ENCODE measurements at regions of chr1 and their contacts with region 1.

Region 1: DNA sequence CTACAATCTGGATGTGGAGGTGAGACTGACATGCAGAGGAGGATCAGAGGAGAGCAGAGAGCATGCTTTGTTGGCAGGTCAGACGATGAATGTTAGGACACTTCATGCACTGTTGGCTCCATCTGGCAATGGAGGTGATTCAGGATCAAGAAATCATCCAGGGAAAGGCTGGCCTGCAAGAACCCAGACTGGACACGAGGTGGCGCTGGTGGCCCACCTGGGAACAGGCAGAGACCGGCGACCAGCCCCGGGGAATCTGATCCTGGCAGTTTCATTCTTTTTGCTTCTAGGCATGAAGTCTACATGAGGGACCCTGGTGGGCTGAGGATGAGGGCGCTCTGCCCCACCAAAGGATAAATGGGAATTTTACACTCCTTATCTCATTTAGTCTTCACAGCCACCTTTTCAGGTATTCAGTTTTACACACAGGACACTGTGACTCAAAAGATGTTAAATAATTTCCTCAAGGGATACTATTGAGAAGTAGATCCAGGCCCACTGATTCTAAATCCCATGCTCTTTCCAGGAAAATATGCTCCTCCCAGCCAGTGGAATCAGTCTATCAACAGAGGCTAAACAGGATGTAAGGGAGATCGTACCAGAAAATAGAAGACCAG is 26.2 kb upstream of the SCMH1 start:
- DNase-seq: peak; percentile 52 to 72 (median 70)
- H3K4me3 ChIP-seq: no peak overlapping the region
- H3K4me3 Mint-ChIP-seq: peak overlapping the region in 1 of 2 donors; percentile 37
- H3K27ac ChIP-seq: no peak overlapping the region
- H3K27ac Mint-ChIP-seq: no peak overlapping the region
- H3K4me1 ChIP-seq: peaks cover 1 to 4% of the 10 kb centered on the region in 2 donors
- H3K4me1 Mint-ChIP-seq: peaks cover 8% of the 10 kb centered on the region
- H3K27me3 ChIP-seq: no peaks in the 10 kb centered on the region
- H3K27me3 Mint-ChIP-seq: peaks cover 0 to 6% (median 5%) of the 10 kb centered on the region in 3 donors
- CTCF ChIP-seq: peak; percentile 98

Region 2: DNA sequence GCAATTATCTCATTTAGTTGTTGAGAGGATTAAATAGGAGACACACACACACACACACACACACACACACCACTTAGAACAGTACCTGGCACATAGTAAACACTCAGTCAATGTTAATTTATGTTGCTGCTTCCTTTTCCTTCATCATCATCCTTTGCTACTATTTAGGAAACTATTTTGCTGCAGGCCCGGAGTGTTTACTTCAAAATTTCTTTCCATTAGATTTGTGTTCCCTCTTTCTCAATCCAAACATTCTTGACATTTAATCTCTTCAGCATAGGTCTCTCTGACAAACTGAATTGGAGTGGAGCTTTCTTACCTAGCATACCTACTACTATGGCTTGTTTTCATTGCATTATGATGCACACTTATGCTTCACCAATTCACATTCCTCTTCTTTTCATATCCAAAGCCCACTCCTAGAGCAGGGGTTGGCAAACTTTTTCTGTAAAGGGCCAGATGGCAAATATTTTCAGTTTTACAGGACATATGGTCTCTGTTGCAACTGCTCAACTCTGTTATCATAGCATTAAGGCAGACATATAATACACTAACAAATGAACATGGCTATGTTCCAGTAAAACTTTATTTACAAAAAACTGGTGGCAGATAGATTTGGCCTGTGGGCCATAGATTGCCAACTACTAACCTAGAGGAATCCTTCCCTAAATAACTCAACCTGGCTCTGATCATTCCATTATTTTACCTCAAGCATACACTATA is 75.6 kb before region 1 on chr1:
- intact Hi-C with region 1: no loop called
- DNase-seq: no peak
- H3K4me3 ChIP-seq: no peak overlapping the region
- H3K4me3 Mint-ChIP-seq: no peak overlapping the region
- H3K27ac ChIP-seq: no peak overlapping the region
- H3K27ac Mint-ChIP-seq: no peak overlapping the region
- H3K4me1 ChIP-seq: no peaks in the 10 kb centered on the region
- H3K4me1 Mint-ChIP-seq: peaks cover 3% of the 10 kb centered on the region
- H3K27me3 ChIP-seq: no peaks in the 10 kb centered on the region
- H3K27me3 Mint-ChIP-seq: no peaks in the 10 kb centered on the region
- CTCF ChIP-seq: no peak

Region 3: GRCh38 chr1:41286486-41286885 is 18.2 kb after region 1 on chr1:
- intact Hi-C with region 1: no loop called
- DNase-seq: no peak
- H3K4me3 ChIP-seq: no peak overlapping the region
- H3K4me3 Mint-ChIP-seq: no peak overlapping the region
- H3K27ac ChIP-seq: no peak overlapping the region
- H3K27ac Mint-ChIP-seq: no peak overlapping the region
- H3K4me1 ChIP-seq: no peaks in the 10 kb centered on the region
- H3K4me1 Mint-ChIP-seq: peaks cover 11% of the 10 kb centered on the region
- H3K27me3 ChIP-seq: peaks cover 0 to 9% of the 10 kb centered on the region in 2 donors
- H3K27me3 Mint-ChIP-seq: peaks cover 28 to 30% (median 29%) of the 10 kb centered on the region in 3 donors
- CTCF ChIP-seq: no peak

Region 4: DNA sequence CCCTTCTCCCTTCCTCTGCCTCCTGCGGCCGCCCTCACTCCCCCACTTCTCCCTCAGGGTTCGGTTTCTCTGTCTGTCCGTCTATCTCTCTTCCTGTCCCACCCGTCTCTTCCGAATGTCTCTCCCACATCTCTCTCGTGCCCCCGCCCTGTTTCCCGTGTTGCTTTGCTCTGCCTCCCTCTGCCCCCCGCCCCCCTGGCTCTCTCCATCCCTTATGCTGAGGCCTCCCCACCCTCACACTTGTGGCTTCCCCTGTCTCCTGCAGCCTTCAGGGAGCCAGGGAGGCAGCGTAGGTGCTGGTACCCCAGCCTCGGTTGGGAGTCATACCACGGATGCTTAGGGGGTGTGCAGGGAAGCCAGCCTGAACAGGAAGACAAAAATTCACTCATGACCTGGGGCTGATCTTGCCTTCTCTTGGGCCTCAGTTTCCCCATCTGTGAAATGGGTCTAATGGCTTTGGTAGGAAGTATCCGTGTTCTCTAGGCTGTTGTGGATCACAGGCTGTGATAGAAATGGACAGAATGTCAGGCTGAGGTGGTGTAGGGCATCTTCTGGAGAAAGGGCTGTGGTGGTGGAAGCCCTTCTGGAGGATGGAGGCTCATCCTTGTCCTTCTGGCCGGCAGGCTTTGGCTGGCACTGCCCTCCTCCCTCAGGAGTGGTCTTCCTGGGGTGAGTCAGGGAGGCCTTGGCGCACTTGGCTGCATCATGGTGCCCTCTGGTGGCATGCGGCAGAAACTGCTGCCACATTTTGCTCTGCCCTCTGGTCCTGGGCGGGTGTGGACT is 148.5 kb after region 1 on chr1:
- intact Hi-C with region 1: loop called (anchors 5 kb)
- DNase-seq: peak; percentile 63 to 76 (median 70)
- H3K4me3 ChIP-seq: no peak overlapping the region
- H3K4me3 Mint-ChIP-seq: peak overlapping the region in 1 of 2 donors; percentile 39
- H3K27ac ChIP-seq: no peak overlapping the region
- H3K27ac Mint-ChIP-seq: no peak overlapping the region
- H3K4me1 ChIP-seq: peaks cover 6 to 20% of the 10 kb centered on the region in 2 donors
- H3K4me1 Mint-ChIP-seq: peaks cover 18% of the 10 kb centered on the region
- H3K27me3 ChIP-seq: no peaks in the 10 kb centered on the region
- H3K27me3 Mint-ChIP-seq: peaks cover 3 to 9% (median 5%) of the 10 kb centered on the region in 3 donors
- CTCF ChIP-seq: peak; percentile 87

Region 5: GRCh38 chr1:41432481-41433280 is 164.4 kb after region 1 on chr1:
- intact Hi-C with region 1: loop called (anchors 1 to 2 kb)
- DNase-seq: peak; percentile 87 to 91 (median 91)
- H3K4me3 ChIP-seq: no peak overlapping the region
- H3K4me3 Mint-ChIP-seq: peak overlapping the region in 1 of 2 donors; percentile 47
- H3K27ac ChIP-seq: no peak overlapping the region
- H3K27ac Mint-ChIP-seq: peak overlapping the region in 4 of 7 donors; percentile 25 to 62 (median 46)
- H3K4me1 ChIP-seq: peaks cover 31 to 39% of the 10 kb centered on the region in 2 donors
- H3K4me1 Mint-ChIP-seq: peaks cover 45% of the 10 kb centered on the region
- H3K27me3 ChIP-seq: peaks cover 0 to 7% of the 10 kb centered on the region in 2 donors
- H3K27me3 Mint-ChIP-seq: peaks cover 18 to 31% (median 30%) of the 10 kb centered on the region in 3 donors
- CTCF ChIP-seq: peak; percentile 97

Measured in CD14-positive monocyte (primary cell).